Posterior vena cava (tissue), 2 donors: ENCODE measurements at regions of chr12 and their contacts with region 1.

Region 1: GRCh38 chr12:50174971-50175715 is 8.0 kb upstream of the CERS5 start:
- DNase-seq: no peak

Region 2: DNA sequence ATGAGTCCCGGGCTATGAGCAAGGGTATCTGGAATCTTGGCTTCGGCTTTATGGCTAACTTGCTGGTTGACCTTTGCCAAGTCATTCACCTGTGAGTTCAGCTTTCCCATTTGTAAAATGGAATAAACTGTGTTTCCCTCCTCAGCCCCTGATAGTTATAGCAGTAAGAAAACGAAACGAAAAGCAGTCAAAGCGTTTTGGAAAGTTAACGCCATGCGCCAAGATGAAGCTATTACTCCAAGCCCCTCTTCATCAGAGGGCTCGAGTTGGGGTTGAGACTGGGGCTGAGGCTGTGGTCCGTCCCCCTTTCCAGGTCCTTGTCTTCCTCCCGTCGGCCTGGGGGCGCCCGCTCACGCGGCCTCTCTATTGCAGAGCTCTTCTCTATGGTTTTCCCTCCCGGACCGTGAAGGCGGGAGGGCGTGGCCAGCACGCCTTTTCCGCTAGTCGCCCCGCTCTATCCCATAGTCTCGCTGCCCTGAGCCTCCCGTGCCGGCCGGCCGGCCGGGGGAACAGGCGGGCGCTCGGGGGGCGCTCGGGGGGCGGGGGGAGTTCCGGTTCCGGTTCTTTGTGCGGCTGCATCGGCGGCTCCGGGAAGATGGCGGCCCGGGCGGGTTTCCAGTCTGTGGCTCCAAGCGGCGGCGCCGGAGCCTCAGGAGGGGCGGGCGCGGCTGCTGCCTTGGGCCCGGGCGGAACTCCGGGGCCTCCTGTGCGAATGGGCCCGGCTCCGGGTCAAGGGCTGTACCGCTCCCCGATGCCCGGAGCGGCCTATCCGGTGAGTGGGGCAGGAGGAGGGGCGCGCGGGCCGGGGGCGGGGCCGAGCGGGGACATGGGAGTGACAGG is 90.1 kb before region 1 on chr12 and contains the start of gene SMARCD1:
- intact Hi-C with region 1: loop called (anchors 5 kb)
- DNase-seq: peak; percentile 97
- total RNA-seq, gene SMARCD1: 27.9 to 33.0 TPM